Sigmoid colon (tissue), 7 donors: ENCODE measurements at regions of chr11 and their contacts with region 1.

Region 1: DNA sequence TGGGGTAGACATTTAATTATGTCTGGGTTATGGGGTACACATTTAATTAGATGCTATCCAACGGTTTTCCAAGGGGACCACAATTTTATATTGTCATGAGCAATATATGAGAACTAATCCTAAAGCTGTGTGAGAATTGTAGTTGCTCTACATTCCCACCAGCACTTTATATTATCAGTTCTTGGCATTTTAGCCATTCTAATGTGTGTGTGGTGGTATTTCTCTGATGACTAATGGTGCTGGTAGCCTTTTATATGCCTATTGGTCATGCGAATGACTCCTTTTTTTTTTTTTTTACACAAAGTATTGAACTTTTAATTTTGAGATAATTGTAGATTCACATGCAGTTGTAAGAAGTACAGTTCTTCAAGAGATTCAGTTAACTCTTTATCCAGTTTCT is 26.2 kb downstream of the TMEM135 start:
- DNase-seq: no peak
- H3K4me3 ChIP-seq: no peak overlapping the region
- H3K27ac ChIP-seq: no peak overlapping the region
- H3K4me1 ChIP-seq: no peaks in the 10 kb centered on the region
- H3K27me3 ChIP-seq: no peaks in the 10 kb centered on the region
- CTCF ChIP-seq: no peak
- EP300 ChIP-seq: no peak
- POLR2A ChIP-seq: no peak

Region 2: GRCh38 chr11:87013912-87014825 is 49.8 kb before region 1 on chr11:
- intact Hi-C with region 1: loop called (anchors 2 kb)
- DNase-seq: no peak
- H3K4me3 ChIP-seq: no peak overlapping the region
- H3K27ac ChIP-seq: no peak overlapping the region
- H3K4me1 ChIP-seq: peaks cover 0 to 15% (median 4%) of the 10 kb centered on the region in 4 donors
- H3K27me3 ChIP-seq: no peaks in the 10 kb centered on the region
- CTCF ChIP-seq: no peak
- EP300 ChIP-seq: no peak
- POLR2A ChIP-seq: no peak